ENCODE measurements at regions of chr7 and their contacts with region 1.

Region 1: DNA sequence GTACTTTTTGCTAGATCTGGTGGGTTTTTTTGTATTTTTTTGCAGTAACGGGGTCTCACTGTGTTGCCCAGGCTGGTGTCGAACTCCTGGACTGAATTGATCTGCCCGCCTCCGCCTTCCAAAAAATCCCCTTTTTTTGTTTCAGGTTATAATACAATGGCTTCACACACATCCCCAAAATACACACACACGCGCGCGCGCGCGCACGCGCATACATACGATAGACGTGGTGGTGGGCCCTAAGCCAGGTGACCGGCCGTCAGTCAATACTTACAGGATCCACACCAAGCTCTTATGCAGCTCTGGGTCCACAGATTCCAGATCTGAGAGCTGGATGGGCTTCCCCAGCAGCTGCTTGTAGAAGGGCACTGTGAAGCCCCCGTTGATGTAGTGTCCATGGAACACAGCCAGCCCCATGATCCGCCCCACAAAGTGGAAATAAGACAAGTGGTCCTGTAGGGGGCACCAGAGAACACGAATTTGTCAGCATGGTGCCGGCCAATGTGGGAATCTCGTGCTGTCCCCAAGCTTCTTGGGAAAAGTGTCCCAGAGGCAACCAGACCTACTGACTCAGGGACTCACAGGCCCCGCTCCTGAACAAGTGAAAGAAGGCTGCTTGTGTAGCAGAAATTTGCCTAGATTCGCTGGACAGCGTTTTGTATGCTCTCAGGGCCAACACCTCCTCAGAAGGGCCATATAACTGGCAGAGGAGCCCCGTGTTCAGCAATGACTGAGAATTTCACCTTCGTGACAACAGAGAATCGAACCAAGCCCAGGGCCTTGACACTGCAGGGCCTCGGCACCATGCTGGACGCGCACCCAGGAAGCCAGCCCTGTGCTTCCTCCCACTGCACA is 103.6 kb downstream of the SMURF1 start:
- DNase-seq: peak; percentile 63 to 89 (median 84)
- H3K4me3 ChIP-seq: no peak overlapping the region
- H3K27ac ChIP-seq: peak overlapping the region in 51 of 59 donors; percentile 2 to 83 (median 63)
- H3K27me3 ChIP-seq: no peaks in the 10 kb centered on the region
- CTCF ChIP-seq: peak; percentile 68 to 93 (median 87)

Region 2: DNA sequence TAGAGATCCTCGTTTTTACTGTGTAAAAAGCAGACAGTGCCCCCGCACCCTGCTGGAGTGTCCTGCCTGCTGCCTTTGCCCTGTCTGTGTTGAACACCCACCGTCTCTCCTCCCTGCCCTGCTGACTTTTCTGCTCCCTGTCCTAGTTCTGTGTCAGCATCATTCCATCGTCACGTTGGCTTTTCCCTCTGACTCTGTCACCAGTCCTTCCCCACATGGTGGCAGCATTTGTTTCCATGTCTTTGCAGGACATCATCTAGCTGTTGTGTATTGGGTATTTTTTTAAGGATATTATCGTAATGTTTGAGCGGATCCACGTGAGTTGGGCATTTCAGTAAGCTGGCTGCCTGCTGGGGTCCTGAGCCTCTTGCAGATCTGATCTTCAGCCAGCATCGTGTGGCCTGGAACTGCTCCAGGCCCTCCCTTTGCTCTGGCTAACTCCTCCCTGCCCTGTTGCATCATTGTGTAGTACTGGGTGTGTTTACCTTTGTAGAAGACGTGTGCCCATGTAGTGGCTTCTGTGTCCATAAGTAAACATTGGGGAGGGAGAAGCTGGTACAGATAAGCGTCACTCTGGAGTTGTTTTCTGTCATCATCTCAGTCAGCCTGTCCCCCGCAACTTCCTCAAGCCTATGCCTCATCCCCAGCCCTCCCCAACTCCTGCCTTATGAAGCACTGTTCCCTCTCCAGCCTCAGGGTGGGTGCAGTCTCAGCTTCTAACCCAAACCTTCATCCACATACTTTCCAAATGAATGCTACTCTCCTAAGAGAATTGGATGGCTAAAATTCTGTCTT is 117.7 kb before region 1 on chr7:
- intact Hi-C with region 1: loop called in 1 of 2 experiments (anchors 10 kb)
- DNase-seq: peak in 5 of 10 donors; percentile 30 to 75 (median 47)
- H3K4me3 ChIP-seq: peak overlapping the region in 2 of 59 donors; percentile 5 to 9
- H3K27ac ChIP-seq: peak overlapping the region in 29 of 59 donors; percentile 12 to 79 (median 41)
- H3K27me3 ChIP-seq: no peaks in the 10 kb centered on the region
- CTCF ChIP-seq: peak in 48 of 56 donors; percentile 8 to 59 (median 34)

Region 3: GRCh38 chr7:98949336-98950044 is 90.8 kb before region 1 on chr7:
- intact Hi-C with region 1: no loop called
- DNase-seq: peak; percentile 45 to 93 (median 82)
- H3K4me3 ChIP-seq: no peak overlapping the region
- H3K27ac ChIP-seq: peak overlapping the region in 10 of 59 donors; percentile 9 to 60 (median 43)
- H3K27me3 ChIP-seq: no peaks in the 10 kb centered on the region
- CTCF ChIP-seq: no peak

Region 4: GRCh38 chr7:99267481-99267840 is 227.1 kb after region 1 on chr7:
- intact Hi-C with region 1: loop called in 1 of 2 experiments (anchors 5 kb)
- DNase-seq: peak in 6 of 10 donors; percentile 36 to 80 (median 60)
- H3K4me3 ChIP-seq: no peak overlapping the region
- H3K27ac ChIP-seq: peak overlapping the region in 54 of 59 donors; percentile 27 to 85 (median 73)
- H3K27me3 ChIP-seq: no peaks in the 10 kb centered on the region
- CTCF ChIP-seq: no peak

Region 5: DNA sequence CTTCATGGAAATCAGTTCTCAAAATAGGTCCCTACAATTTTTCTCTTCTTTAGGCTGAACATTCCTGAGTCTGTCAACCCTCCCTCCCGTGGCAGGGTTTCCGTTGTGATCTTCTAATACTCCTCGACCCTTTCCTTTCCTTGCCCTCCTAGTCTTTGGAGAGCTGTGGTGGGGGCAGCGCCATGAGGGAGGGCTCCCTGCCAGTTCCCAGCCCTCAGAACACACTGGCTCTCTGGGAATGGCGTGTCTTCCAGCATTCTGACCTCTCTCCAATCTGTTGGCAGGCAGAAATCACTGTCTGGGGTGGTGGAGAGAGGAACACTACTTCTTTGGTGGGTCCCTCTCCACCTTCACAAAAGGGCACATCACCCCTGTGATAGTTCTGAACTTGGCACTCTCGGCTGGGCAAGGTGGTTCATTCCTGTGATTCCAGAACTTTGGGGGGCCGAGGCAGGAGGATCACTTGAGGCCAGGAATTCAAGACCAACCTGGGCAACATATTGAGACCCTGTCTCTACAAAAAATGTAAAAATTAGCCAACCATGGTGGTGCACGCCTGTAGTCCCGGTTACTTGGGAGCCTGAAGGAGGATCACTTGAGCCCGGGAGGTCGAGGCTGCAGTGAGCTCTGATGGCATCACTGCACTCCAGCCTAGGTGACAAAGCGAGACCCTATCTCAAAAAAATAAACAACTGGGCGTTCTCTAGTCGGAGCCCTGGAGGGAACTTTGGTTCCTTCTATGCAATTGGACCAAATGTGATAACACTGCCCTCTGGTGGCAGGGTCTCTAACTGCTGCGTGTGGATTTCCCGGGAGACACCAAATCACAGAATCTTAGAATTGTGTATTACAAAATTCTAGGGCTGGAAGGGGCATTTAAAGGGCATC is 272.2 kb after region 1 on chr7:
- intact Hi-C with region 1: loop called (anchors 1 to 2 kb)
- DNase-seq: peak in 9 of 10 donors; percentile 27 to 84 (median 63)
- H3K4me3 ChIP-seq: peak overlapping the region in 4 of 59 donors; percentile 2 to 18 (median 10)
- H3K27ac ChIP-seq: no peak overlapping the region
- H3K27me3 ChIP-seq: no peaks in the 10 kb centered on the region
- CTCF ChIP-seq: peak; percentile 80 to 98 (median 93)

Measured in dorsolateral prefrontal cortex (tissue), 120 donors.